HepG2 (cell line): ENCODE measurements at regions of chr7 and their contacts with region 1.

Region 1: GRCh38 chr7:119270045-119270464 is 1002.9 kb upstream of the KCND2 start:
- DNase-seq: peak; percentile 66
- ATAC-seq: peak; percentile 97
- H3K4me3 ChIP-seq: no peak overlapping the region
- H3K27ac ChIP-seq: no peak overlapping the region
- H3K4me1 ChIP-seq: no peaks in the 10 kb centered on the region
- H3K27me3 ChIP-seq: no peaks in the 10 kb centered on the region
- CTCF ChIP-seq: peak; percentile 79
- EP300 ChIP-seq: no peak
- POLR2A ChIP-seq: no peak
- RAD21 ChIP-seq: peak; percentile 35; the same call in 1 of the 2 replicates

Region 2: DNA sequence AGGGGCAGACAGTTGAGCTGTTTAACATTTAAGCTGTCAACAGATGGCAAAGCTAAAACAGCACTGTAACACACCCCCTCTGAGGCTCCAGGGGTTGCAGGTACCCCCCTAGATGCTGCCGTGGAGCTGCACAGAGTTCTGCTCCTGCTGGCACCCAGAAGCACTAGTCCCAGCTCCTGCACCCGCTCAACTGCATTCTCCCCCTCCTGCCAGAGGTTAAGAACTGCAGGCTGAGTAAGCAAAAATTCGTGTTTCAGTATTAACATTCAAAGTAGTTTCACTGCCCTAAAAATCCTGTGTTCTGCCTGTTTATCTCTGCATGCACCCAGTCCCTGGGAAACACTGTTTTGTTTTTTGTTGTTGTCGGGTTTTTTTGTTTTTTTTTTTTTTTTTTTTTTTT is 212.2 kb after region 1 on chr7:
- CTCF ChIA-PET with region 1: no interaction called
- POLR2A ChIA-PET with region 1: no interaction called
- in situ Hi-C with region 1: no loop called
- intact Hi-C with region 1: loop called (anchors 2 kb)
- DNase-seq: peak; percentile 32
- ATAC-seq: peak; percentile 99
- H3K4me3 ChIP-seq: no peak overlapping the region
- H3K27ac ChIP-seq: no peak overlapping the region
- H3K4me1 ChIP-seq: no peaks in the 10 kb centered on the region
- H3K27me3 ChIP-seq: no peaks in the 10 kb centered on the region
- CTCF ChIP-seq: peak; percentile 24; the same call in 1 of the 2 replicates
- EP300 ChIP-seq: no peak
- POLR2A ChIP-seq: no peak
- RAD21 ChIP-seq: no peak

Region 3: GRCh38 chr7:119545118-119545517 is 275.1 kb after region 1 on chr7:
- CTCF ChIA-PET with region 1: no interaction called
- POLR2A ChIA-PET with region 1: no interaction called
- in situ Hi-C with region 1: no loop called
- intact Hi-C with region 1: no loop called
- DNase-seq: peak; percentile 17
- ATAC-seq: no peak
- H3K4me3 ChIP-seq: no peak overlapping the region
- H3K27ac ChIP-seq: no peak overlapping the region
- H3K4me1 ChIP-seq: no peaks in the 10 kb centered on the region
- H3K27me3 ChIP-seq: no peaks in the 10 kb centered on the region
- CTCF ChIP-seq: no peak
- EP300 ChIP-seq: no peak
- POLR2A ChIP-seq: no peak
- RAD21 ChIP-seq: no peak

Region 4: DNA sequence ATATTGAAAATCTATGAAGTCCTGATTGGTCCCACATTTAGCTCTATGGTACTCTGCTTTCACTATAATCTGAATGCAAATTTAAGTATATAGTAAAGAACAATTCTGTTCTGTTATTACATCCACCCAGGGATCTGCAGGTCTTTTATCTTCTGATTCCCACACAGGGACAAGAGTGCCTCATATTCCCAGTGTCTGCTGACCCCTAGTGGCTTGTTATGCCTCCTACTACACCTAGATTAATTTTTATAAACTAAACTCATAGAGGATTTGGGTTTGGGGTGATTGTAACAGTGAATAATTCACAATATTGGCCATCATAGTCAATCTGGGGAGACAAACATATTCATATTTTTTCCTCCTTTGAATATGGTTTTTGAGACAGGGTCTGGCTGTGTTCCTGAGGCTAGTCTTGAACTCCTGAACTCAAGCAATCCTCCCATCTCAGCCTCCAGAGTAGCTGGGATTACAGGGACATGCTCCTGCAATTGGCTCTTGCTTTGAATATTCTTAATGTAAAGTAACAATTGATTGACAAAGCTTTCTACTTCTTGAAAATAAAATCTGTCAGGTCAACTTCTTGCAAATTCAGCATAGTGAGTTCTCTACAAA is 1285.0 kb after region 1 on chr7:
- CTCF ChIA-PET with region 1: interaction called, 11 read pairs
- POLR2A ChIA-PET with region 1: no interaction called
- in situ Hi-C with region 1: loop called (anchors 10 kb)
- intact Hi-C with region 1: loop called (anchors 1 kb)
- DNase-seq: peak; percentile 49
- ATAC-seq: peak; percentile 96
- H3K4me3 ChIP-seq: no peak overlapping the region
- H3K27ac ChIP-seq: no peak overlapping the region
- H3K4me1 ChIP-seq: no peaks in the 10 kb centered on the region
- H3K27me3 ChIP-seq: no peaks in the 10 kb centered on the region
- CTCF ChIP-seq: peak; percentile 65
- EP300 ChIP-seq: no peak
- POLR2A ChIP-seq: no peak
- RAD21 ChIP-seq: no peak; the same call in 1 of the 2 replicates